ENCODE measurements at regions of chr11 and their contacts with region 1.

Region 1: DNA sequence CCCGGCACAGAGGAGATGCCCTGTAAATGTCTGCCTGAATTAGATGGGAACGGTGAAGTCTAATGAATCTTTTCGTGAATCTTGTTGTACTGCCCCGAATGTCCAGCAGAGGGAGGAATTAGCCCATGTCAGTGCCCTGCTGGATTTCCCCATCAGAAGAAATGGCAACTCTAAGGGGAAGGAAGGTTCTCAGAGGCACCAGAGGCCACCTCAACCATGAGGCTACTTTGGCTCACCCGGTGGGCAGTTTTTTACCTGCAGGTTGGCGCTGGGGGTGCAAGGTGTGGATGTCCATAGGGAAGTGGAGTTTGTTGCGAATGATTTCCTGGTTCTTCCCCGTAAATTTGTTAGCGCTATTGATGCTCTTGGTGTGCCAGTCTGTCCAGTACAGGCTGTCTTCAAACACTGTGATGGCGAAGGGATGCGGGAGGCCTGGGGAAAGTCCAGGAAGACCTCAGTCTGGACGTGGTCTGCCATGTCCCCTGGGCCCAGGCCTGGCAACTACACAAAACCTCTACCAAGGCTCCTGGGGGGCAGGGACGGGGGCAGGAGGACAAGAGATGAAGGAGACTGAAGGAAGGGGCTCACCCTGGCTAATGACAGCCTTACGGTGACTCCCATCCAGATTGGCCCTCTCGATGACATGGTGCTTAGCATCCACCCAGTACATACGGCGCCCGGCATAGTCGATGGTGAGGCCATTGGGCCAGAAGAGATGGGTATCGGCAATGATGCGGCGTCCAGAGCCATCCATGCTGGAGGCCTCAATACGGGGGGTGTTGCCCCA is 28.5 kb downstream of the LRP4 start:
- DNase-seq: peak; percentile 41 to 79
- ATAC-seq: peak; percentile 91

Region 2: DNA sequence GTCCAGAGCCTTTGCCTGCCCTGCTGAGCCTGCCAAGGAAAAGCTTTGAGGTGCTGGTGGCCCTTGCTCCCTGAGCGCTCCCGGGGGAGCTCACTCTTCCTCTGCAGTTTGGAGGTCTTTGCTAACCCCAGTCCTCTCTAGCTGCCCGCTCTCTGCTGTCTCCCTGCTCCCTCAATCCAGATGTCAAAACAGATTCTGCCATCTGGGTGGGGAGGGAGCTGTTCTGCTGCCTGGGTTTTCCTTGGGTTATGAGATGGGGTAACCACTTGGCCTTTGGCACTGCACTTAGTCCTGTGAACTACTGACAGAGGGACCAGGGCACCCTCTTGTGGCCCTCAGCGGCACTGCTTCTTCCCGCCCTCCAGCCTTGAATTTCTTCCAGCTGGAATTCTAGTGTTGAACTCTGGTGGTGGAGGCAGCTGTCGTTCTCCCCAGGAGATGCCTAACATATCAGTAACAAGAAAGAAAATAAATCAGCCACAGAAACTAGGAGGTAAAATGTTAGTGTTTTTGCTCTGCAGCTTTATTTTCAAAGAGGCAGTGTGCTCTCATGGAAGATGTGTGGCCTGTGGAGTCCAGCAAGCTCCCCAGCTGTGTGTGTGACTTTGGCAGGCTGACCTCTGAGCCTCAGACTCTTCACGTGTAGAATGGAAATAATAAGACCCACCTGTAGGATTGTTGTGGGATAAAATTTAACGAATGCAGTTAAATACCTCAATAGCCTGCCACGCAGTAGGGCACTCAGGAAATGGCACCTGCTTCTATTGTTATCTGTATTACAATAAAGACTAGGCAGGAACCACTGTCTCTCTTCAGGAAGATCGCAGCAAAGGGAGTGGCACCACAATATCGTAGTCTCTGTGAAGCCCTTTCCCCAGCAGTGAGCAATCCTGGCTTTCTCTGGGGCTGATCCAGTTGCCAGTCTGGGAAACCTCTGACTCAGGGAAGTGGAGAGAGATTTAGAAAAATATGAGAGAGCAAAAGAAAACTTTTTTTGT is 263.4 kb after region 1 on chr11:
- intact Hi-C with region 1: loop called in 1 of 2 experiments (anchors 5 kb)
- DNase-seq: peak; percentile 66 to 85
- ATAC-seq: peak; percentile 84

Region 3: GRCh38 chr11:47161134-47161854 is 271.4 kb after region 1 on chr11:
- intact Hi-C with region 1: loop called in 1 of 2 experiments (anchors 5 kb)
- DNase-seq: peak in 1 of 2 donors; percentile 75
- ATAC-seq: peak; percentile 78

Region 4: GRCh38 chr11:47186076-47186936 is 296.4 kb after region 1 on chr11 and contains the start of gene PACSIN3:
- intact Hi-C with region 1: no loop called
- DNase-seq: peak in 1 of 2 donors; percentile 48
- ATAC-seq: peak; percentile 71
- total RNA-seq, gene PACSIN3: 2.2 to 7.1 TPM